ENCODE measurements at regions of chr17 and their contacts with region 1.

Region 1: GRCh38 chr17:43949781-43950180 is 4.0 kb downstream of the PYY start:
- DNase-seq: peak in 2 of 3 donors; percentile 55 to 77
- H3K4me3 ChIP-seq: no peak overlapping the region
- H3K27ac ChIP-seq: no peak overlapping the region
- H3K4me1 ChIP-seq: peaks cover 0 to 41% (median 16%) of the 10 kb centered on the region in 4 experiments
- H3K27me3 ChIP-seq: peaks cover 0 to 31% (median 21%) of the 10 kb centered on the region in 5 experiments

Region 2: GRCh38 chr17:43932357-43932756 is 17.4 kb before region 1 on chr17:
- CTCF ChIA-PET with region 1: no interaction called
- POLR2A ChIA-PET with region 1: no interaction called
- DNase-seq: no peak
- H3K4me3 ChIP-seq: no peak overlapping the region
- H3K27ac ChIP-seq: no peak overlapping the region
- H3K4me1 ChIP-seq: peaks cover 0 to 10% (median 8%) of the 10 kb centered on the region in 4 experiments
- H3K27me3 ChIP-seq: peaks cover 0 to 6% (median 0%) of the 10 kb centered on the region in 5 experiments

Region 3: GRCh38 chr17:43994272-43995149 is 44.7 kb after region 1 on chr17:
- CTCF ChIA-PET with region 1: interaction called, 218 read pairs
- POLR2A ChIA-PET with region 1: no interaction called
- DNase-seq: peak; percentile 69 to 76 (median 70)
- H3K4me3 ChIP-seq: peak overlapping the region in 3 of 7 experiments; percentile 50 to 72 (median 59)
- H3K27ac ChIP-seq: no peak overlapping the region
- H3K4me1 ChIP-seq: peaks cover 0 to 10% (median 6%) of the 10 kb centered on the region in 4 experiments
- H3K27me3 ChIP-seq: peaks cover 0 to 29% (median 13%) of the 10 kb centered on the region in 5 experiments

Measured in common myeloid progenitor, CD34-positive (primary cell).